ENCODE measurements at regions of chr1 and their contacts with region 1.

Region 1: GRCh38 chr1:171188388-171189266 is 3.5 kb downstream of the FMO2 start:
- DNase-seq: no peak

Region 2: GRCh38 chr1:171127501-171127900 is 61.1 kb before region 1 on chr1:
- intact Hi-C with region 1: loop called (anchors 10 kb)
- DNase-seq: no peak

Region 3: GRCh38 chr1:171141688-171142415 is 46.8 kb before region 1 on chr1:
- intact Hi-C with region 1: loop called (anchors 1 kb)
- DNase-seq: no peak

Region 4: GRCh38 chr1:171226747-171227370 is 38.2 kb after region 1 on chr1:
- intact Hi-C with region 1: loop called (anchors 5 kb)
- DNase-seq: no peak

Measured in cardiac septum (tissue), 1 donor.